Vagina (tissue), 2 donors: ENCODE measurements at regions of chr2 and their contacts with region 1.

Region 1: GRCh38 chr2:10434886-10435819 is 13.0 kb downstream of the ODC1 start:
- DNase-seq: no peak
- H3K4me3 ChIP-seq: no peak overlapping the region
- H3K27ac ChIP-seq: no peak overlapping the region
- H3K4me1 ChIP-seq: peaks cover 13% of the 10 kb centered on the region
- H3K27me3 ChIP-seq: no peaks in the 10 kb centered on the region
- CTCF ChIP-seq: peak; percentile 88 to 98 (median 89)
- POLR2A ChIP-seq: no peak

Region 2: GRCh38 chr2:10124538-10125045 is 310.6 kb before region 1 on chr2:
- intact Hi-C with region 1: loop called (anchors 1 kb)
- DNase-seq: no peak
- H3K4me3 ChIP-seq: no peak overlapping the region
- H3K27ac ChIP-seq: no peak overlapping the region
- H3K4me1 ChIP-seq: peaks cover 31% of the 10 kb centered on the region
- H3K27me3 ChIP-seq: peaks cover 6% of the 10 kb centered on the region
- CTCF ChIP-seq: peak; percentile 59 to 73 (median 62)
- POLR2A ChIP-seq: no peak

Region 3: GRCh38 chr2:10329880-10330699 is 105.1 kb before region 1 on chr2:
- intact Hi-C with region 1: no loop called
- DNase-seq: no peak
- H3K4me3 ChIP-seq: no peak overlapping the region
- H3K27ac ChIP-seq: peak overlapping the region; percentile 13
- H3K4me1 ChIP-seq: peaks cover 62% of the 10 kb centered on the region
- H3K27me3 ChIP-seq: no peaks in the 10 kb centered on the region
- CTCF ChIP-seq: no peak
- POLR2A ChIP-seq: no peak